HCT116 (cell line): ENCODE measurements at regions of chr2 and their contacts with region 1.

Region 1: DNA sequence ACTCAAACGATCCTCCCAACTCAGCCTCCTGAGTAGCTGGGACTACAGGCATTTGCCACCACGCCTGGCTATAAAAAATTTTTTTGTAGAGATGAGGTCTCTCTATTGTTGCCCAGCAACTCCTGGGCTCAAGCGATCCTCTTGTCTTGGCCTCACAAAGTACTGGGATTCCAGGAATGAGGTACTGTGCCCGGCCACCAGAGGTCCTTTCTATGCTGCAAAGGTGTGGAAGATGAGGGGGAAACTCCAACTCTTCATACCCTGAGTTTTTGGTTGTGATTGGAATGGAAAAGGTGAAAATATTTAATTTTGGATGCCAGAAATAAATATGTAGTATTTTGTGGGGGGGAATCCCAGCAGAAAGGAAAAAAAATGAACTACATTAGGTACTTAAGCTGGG is 36.0 kb downstream of the MRPL33 start:
- DNase-seq: peak; percentile 19
- ATAC-seq: peak; percentile 94
- H3K4me3 ChIP-seq: no peak overlapping the region
- H3K27ac ChIP-seq: no peak overlapping the region
- H3K4me1 ChIP-seq: peaks cover 0 to 10% of the 10 kb centered on the region in 2 experiments; a peak in 2 of 4 replicates
- H3K27me3 ChIP-seq: no peaks in the 10 kb centered on the region
- CTCF ChIP-seq: peak; percentile 72 to 79 (median 77)
- POLR2A ChIP-seq: no peak
- RAD21 ChIP-seq: peak; percentile 82

Region 2: DNA sequence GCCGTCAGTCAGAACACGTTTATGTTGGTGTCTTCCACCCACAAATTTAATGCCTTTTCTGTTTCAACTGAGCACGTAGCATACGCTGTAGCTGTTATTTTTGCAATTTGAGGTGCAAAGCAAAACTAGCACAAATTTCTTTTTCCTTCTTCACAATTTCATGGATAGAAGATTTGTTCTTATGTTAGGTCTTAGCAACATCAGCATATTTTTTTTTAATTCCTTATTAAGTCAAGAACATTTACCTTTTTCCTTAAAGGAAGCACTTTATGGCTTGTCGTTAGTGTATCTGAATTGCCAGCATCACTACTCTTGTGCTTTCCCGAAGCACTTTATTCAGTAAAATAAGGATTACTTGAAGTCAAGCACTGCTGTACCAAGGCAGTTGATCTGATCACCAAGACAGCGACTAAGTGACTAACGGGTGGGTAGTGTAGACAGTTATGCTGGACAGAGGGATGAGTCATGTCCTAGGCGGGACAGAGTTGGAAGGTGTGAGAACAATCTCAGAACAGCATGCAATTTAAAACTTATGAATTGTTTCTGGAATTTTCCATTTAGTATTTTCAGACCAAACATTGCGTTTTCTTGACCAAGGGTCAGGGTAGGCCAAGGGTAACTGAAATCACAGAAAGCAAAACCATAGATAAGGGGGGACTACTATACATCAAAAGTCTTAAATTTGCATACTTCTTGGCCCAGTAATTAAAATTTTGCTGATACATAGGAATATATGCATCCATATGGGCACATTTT is 96.4 kb after region 1 on chr2:
- CTCF ChIA-PET with region 1: no interaction called
- POLR2A ChIA-PET with region 1: no interaction called
- RAD21 ChIA-PET with region 1: no interaction called
- intact Hi-C with region 1: no loop called
- DNase-seq: peak; percentile 51
- ATAC-seq: peak; percentile 75
- H3K4me3 ChIP-seq: no peak overlapping the region
- H3K27ac ChIP-seq: no peak overlapping the region
- H3K4me1 ChIP-seq: peaks cover 4 to 11% of the 10 kb centered on the region in 2 experiments; a peak in 2 of 4 replicates
- H3K27me3 ChIP-seq: no peaks in the 10 kb centered on the region
- CTCF ChIP-seq: no peak
- POLR2A ChIP-seq: no peak
- RAD21 ChIP-seq: no peak

Region 3: DNA sequence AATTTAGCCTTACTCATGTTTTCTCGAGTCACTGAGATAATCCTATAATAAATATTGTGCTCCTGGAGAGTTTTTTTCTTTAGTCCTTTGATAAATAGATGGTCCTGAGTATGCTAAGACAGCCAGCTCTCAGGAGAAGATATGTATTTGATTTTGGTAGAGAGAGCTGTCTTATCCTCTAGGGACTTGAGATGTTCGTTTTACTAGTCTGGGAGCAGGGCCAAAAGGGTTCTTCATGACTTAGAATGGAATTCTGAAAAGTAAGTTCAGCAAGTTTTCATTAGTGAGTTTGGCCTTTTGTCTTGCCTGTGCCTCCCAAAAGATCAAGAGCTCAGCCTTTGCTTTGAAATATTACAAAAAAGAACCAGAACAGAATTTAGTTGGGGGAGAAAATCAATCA is 329.7 kb after region 1 on chr2:
- CTCF ChIA-PET with region 1: no interaction called
- POLR2A ChIA-PET with region 1: no interaction called
- RAD21 ChIA-PET with region 1: no interaction called
- intact Hi-C with region 1: no loop called
- DNase-seq: no peak
- ATAC-seq: no peak
- H3K4me3 ChIP-seq: no peak overlapping the region
- H3K27ac ChIP-seq: no peak overlapping the region
- H3K4me1 ChIP-seq: no peaks in the 10 kb centered on the region; a peak in 1 of 4 replicates
- H3K27me3 ChIP-seq: no peaks in the 10 kb centered on the region
- CTCF ChIP-seq: no peak
- POLR2A ChIP-seq: no peak
- RAD21 ChIP-seq: no peak

Region 4: DNA sequence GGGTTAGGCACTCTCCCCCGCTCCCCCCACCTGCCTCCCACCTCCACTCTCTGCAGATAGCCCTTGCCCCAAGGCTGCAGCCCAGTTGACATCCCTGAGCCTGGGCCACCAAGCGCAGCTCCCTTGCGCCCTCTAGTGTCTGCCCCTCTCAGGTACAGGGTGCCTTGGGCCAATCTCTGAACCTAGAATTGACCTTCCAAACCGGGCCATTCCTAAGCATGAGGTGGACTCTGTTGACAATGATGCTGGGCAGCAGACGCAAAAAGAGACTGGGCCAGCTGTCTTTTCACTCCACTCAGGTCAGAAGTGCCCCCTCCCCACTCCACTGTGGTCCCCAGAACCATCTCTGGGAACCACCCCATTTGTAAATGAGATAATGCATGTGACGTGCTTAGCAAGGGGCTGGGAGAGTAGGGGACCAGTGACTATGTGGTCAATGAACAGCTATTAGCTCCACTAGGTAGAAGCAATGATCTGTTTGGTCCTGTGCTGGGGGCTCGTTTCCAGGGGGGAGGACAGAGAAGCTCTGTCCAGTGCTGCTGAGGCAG is 645.1 kb after region 1 on chr2:
- CTCF ChIA-PET with region 1: no interaction called
- POLR2A ChIA-PET with region 1: no interaction called
- RAD21 ChIA-PET with region 1: no interaction called
- intact Hi-C with region 1: loop called (anchors 1 kb)
- DNase-seq: peak; percentile 32
- ATAC-seq: peak; percentile 91
- H3K4me3 ChIP-seq: no peak overlapping the region
- H3K27ac ChIP-seq: no peak overlapping the region
- H3K4me1 ChIP-seq: peaks cover 8 to 31% of the 10 kb centered on the region in 2 experiments; a peak in 3 of 4 replicates
- H3K27me3 ChIP-seq: no peaks in the 10 kb centered on the region
- CTCF ChIP-seq: peak; percentile 85 to 98 (median 97)
- POLR2A ChIP-seq: no peak
- RAD21 ChIP-seq: peak; percentile 97